Esophagus muscularis mucosa (tissue), 4 donors: ENCODE measurements at regions of chr15 and their contacts with region 1.

Region 1: DNA sequence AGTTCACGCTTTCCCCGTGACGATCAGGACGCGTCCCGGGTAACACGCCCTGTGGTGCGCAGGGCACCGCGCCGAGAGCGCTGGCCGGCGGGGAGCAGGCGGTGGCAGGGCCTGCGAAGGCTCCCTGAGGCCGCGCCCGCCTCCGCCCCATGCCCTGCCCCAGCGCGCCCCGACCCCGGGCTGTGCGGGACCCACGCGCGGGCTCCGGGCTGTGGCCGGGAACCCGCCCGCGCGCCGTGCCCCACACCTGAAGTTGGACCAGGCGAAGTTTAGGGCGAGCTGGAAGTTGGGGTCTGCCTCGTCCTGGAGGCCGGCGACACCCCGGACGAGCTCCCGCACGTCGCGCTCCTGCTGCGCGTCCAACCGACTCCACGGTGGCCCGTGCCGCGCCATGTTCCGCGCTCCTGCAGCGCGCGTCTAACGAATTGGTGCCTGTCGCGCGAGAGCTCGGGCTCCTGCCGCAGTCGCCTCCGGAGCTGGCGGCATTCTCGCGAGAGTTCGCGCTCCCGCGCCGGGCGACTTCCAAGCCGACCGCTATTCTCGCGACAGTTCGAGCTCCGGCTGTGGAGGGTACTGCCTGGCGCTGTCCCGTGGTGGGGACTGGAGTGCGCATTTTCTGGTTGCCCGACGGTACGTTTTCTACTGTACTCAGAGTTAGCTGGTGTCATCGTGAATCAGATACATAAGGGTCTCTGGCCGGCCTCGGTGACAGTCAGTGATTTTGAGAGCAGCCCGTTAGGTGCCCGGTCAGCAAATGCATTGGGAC is at the start of gene TUBGCP5:
- DNase-seq: peak; percentile 98
- H3K4me3 ChIP-seq: peak within 1 kb of the TSS; percentile 75 to 96 (median 82)
- H3K27ac ChIP-seq: peak within 1 kb of the TSS; percentile 79 to 92 (median 88)
- H3K4me1 ChIP-seq: peaks cover 12 to 27% (median 22%) of the 10 kb centered on the region in 4 donors
- H3K27me3 ChIP-seq: no peaks in the 10 kb centered on the region
- CTCF ChIP-seq: peak; percentile 39 to 68 (median 55)
- EP300 ChIP-seq: no peak
- POLR2A ChIP-seq: peak; percentile 61
- total RNA-seq, gene TUBGCP5: 8.1 to 18.3 (median 14.1) TPM

Region 2: DNA sequence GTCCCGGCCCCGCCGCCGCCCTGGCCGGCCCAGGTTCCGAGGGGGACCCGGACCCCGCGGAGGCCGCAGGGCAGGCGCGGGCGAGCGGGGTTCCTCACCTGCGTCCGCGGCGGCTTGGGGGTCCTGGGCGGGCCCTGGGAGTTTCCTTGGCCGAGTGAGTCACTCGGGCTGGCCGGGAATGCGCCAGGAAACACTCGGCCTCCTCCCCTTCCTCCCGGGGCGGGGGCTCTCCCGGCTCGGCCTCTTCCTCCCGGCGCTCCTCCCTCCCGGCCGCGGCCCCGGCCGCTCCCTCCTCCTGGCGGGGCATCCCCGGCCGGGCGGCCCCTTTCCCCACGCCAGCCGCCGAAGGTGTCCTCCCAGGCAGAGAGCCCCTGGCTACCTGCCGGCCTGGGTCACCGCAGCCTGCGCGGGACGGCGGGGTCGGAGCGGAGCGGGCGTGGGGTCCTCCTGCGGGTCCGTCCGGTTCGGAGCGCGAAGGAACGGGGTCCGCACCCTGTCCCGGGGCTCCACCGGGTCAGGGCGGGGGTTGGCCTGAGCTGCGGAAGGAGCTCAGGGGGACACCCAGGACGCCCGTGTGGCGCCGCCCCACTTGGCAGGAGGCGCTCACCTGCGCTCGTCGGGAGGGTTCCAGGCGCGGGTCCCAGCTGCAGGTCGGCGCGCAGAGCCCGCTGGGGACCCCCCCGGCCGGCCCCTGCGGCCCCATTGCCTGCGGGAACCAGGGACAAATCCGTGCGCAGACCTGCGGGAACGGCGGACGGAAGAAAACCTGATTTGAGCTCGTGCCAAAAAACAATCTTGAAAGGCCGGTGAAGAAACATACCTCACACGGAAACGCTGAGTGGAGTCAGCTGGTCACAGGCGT is 58.9 kb before region 1 on chr15 and contains the start of gene CYFIP1:
- intact Hi-C with region 1: loop called (anchors 2 kb)
- DNase-seq: no peak
- H3K4me3 ChIP-seq: peak within 1 kb of the TSS; percentile 77 to 98 (median 85)
- H3K27ac ChIP-seq: peak within 1 kb of the TSS; percentile 76 to 91 (median 85)
- H3K4me1 ChIP-seq: peaks cover 10 to 26% (median 21%) of the 10 kb centered on the region in 4 donors
- H3K27me3 ChIP-seq: no peaks in the 10 kb centered on the region
- CTCF ChIP-seq: no peak
- EP300 ChIP-seq: no peak
- POLR2A ChIP-seq: peak; percentile 14
- total RNA-seq, gene CYFIP1: 86.8 to 131 (median 105) TPM

Region 3: GRCh38 chr15:23467110-23467600 is 427.8 kb after region 1 on chr15:
- intact Hi-C with region 1: loop called (anchors 5 kb)
- DNase-seq: no peak
- H3K4me3 ChIP-seq: no peak overlapping the region
- H3K27ac ChIP-seq: no peak overlapping the region
- H3K4me1 ChIP-seq: no peaks in the 10 kb centered on the region
- H3K27me3 ChIP-seq: peaks cover 0 to 7% (median 0%) of the 10 kb centered on the region in 4 donors
- CTCF ChIP-seq: peak; percentile 31 to 42 (median 38)
- EP300 ChIP-seq: no peak
- POLR2A ChIP-seq: no peak